ENCODE measurements at regions of chr3 and their contacts with region 1.

Region 1: DNA sequence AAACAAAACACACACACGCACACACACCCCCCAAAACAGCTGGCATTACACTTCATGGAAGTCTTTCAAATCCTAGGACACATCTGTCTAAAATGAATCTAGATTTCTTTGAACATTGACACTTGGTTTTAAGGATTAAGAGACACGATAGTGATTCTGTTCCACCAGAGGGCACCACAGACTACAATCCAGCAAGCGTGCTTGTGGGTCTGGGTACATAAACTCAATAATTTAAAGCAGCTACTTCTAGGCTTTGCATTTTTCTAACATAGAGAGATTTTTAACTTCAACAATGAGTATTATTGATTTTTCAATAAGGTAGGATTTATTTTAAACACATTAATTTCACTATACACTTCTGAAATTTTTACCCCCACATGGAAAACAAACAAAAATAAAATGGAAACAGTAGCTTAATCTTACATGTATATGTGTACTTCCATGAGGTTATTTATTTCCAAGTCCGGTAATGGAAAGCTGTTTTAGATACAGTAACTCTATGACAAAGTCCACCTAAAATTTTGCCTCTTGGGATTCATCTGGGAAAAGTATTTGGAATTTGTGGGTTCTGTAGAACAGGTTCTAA is 564.0 kb upstream of the TGFBR2 start:
- ATAC-seq: peak; percentile 43 to 77 (median 60)
- H3K4me3 ChIP-seq: no peak overlapping the region
- H3K27ac ChIP-seq: no peak overlapping the region
- H3K4me1 ChIP-seq: peaks cover 4 to 9% of the 10 kb centered on the region in 2 donors

Region 2: DNA sequence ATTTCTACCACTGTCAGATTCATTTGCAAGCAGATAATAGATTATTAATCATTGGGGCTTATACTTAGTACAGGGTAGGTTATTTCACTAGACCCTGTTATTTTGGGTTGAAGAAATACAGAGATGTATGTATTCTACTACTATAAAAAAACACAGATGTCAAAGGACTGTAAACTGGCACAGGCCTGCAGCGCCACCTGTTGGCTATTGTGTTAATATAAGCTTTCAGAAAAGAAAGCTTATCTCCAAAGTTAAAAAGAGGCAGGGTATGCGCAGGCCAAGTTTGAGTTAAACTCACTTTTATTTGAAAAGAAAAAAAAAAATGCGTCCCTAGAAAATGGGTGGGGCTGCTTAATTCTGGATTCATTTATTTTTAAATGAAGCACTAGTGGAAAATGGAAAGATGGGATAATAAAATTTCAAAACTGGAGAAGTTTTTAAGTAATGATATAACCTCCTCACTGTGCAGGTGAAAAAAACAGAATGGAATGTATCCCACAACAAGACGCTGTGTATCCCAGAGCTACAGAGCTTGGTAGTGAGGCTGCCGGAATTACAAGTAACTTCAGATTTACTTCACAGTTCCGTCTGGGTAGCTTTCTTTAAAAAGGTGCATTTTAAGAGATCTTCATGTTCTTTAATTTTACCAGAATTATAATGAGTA is 156.9 kb after region 1 on chr3:
- in situ Hi-C with region 1: loop called in 4 of 9 experiments (anchors 10 to 25 kb)
- ATAC-seq: peak in 3 of 8 experiments; percentile 21 to 55 (median 31)
- H3K4me3 ChIP-seq: no peak overlapping the region
- H3K27ac ChIP-seq: no peak overlapping the region
- H3K4me1 ChIP-seq: no peaks in the 10 kb centered on the region

Region 3: DNA sequence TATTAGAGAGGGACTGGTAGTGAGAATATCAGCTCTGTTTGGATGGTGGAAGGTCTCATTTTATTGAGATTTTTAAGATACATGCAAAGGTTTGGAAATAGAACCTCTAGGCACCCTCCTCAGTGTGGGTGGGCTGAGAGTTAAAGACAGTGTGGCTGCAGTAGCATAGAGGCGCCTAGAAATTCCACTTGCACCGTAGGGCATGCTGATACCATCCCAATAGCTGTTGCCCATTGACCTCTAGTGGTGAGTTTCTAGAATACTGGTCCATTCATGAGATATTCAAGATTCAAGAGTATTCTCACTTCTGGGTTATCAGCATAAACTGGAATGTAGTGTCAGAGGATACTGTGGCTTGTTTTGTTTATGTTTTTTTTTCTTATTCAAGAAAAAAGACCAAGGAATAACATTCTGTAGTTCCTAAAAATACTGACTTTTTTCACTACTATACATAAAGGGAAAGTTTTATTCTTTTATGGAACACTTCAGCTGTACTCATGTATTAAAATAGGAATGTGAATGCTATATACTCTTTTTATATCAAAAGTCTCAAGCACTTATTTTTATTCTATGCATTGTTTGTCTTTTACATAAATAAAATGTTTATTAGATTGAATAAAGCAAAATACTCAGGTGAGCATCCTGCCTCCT is 651.2 kb after region 1 on chr3:
- in situ Hi-C with region 1: loop called in 1 of 9 experiments (anchors 25 kb)
- ATAC-seq: peak; percentile 51 to 98 (median 88)
- H3K4me3 ChIP-seq: no peak overlapping the region
- H3K27ac ChIP-seq: no peak overlapping the region
- H3K4me1 ChIP-seq: no peaks in the 10 kb centered on the region

Region 4: DNA sequence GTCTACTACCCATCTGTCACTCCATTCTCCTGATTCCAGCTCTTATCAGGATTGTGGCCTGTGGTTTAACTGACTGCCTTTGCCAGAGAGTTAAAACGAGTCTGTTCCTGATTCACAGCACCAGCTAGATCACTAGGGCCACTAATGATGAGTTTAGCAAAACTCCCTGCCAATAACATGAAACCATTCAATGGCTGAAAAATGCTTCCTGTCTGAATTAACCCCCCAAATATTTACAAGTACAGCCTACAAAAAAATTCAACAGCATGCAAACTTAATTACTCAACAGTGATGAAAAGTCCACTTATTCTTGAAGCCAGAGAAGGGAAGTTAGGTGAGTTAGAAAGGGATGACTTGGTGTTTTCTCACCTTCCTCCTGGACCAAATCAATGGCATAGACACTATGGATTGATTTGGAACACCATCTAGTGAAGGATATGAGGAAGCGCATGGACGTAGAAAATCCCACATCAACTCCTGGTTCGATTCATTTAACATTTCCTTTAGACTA is 705.5 kb after region 1 on chr3:
- in situ Hi-C with region 1: loop called in 1 of 9 experiments (anchors 25 kb)
- ATAC-seq: peak in 1 of 8 experiments; percentile 30
- H3K4me3 ChIP-seq: no peak overlapping the region
- H3K27ac ChIP-seq: no peak overlapping the region
- H3K4me1 ChIP-seq: peaks cover 0 to 5% of the 10 kb centered on the region in 2 donors